GM23248 (cell line): ENCODE measurements at regions of chr6 and their contacts with region 1.

Region 1: DNA sequence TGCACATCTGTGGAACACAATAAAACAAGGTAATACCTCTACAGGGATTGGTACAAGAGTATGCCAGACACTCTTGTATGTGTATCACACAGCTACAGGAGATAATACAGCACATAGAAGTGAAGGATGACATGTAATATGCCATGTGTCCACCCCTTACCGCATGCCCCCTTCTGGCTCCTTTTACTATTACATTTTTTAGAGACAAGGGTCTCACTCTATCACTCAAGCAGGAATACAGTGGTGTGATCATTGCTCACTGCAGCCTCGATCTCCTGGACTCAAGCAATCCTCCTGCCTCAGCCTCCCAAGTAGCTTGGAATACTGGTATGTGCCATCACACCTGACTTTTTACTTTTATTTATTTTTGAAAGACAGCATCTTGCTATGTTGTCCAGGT is 4.2 kb upstream of the NCR3 start:
- DNase-seq: peak; percentile 48
- H3K4me3 ChIP-seq: no peak overlapping the region
- H3K27ac ChIP-seq: no peak overlapping the region
- H3K4me1 ChIP-seq: no peaks in the 10 kb centered on the region
- H3K27me3 ChIP-seq: no peaks in the 10 kb centered on the region

Region 2: DNA sequence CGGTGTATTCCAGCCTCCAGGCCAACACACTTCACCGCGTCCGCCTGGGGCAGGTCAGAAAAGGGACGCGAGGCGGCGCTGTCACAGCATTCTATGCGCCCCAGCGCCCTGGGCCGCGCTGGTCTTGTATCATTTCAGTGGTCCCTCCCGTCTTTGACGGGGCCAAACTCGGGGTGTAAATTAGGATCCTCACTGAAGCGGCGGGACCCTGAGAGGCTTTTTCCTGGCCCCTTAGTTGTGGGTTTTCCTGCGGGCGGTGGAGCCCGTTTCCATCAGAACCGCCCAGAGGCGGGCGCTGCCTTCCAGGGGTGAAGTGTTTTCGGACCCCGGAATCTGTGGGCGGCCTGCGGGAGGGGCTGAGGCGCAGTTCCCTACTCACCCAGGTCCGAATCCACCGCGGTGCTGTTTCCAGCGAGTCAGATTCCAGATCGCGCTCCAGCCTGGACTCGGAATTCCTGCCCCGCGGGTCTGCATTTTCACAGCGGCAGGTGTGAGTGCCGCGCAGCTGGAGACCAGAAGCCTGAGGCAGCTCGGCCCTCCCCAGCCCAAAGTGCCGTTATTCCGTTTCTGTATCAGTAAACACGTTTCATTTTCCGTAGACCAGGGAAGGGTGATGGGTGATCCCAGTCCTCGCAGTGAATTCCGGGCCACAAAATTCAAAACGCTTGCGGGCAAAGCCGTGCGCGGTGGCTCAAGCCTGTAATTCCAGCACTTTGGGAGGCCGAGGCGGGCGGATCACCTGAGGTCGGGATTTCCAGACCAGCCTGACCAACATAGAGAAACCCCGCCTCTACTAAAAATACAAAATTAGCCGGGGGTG is 102.9 kb before region 1 on chr6:
- in situ Hi-C with region 1: loop called (anchors 10 kb)
- DNase-seq: peak; percentile 93
- H3K4me3 ChIP-seq: peak overlapping the region; percentile 87
- H3K27ac ChIP-seq: peak overlapping the region; percentile 73
- H3K4me1 ChIP-seq: peaks cover 9% of the 10 kb centered on the region
- H3K27me3 ChIP-seq: no peaks in the 10 kb centered on the region

Region 3: GRCh38 chr6:31541658-31542521 is 55.1 kb before region 1 on chr6 and contains the start of gene DDX39B:
- in situ Hi-C with region 1: loop called (anchors 5 kb)
- DNase-seq: peak; percentile 99
- H3K4me3 ChIP-seq: peak within 1 kb of the TSS; percentile 96
- H3K27ac ChIP-seq: peak within 1 kb of the TSS; percentile 96
- H3K4me1 ChIP-seq: peaks cover 19% of the 10 kb centered on the region
- H3K27me3 ChIP-seq: no peaks in the 10 kb centered on the region
- total RNA-seq, gene DDX39B: 319 and 415 TPM in 2 replicates